ENCODE measurements at regions of chr16 and their contacts with region 1.

Region 1: GRCh38 chr16:80084685-80085084 is 456.1 kb upstream of the DYNLRB2 start:
- DNase-seq: peak; percentile 30
- ATAC-seq: peak; percentile 53
- H3K4me3 Mint-ChIP-seq: no peak overlapping the region
- H3K27ac Mint-ChIP-seq: no peak overlapping the region
- H3K4me1 Mint-ChIP-seq: no peaks in the 10 kb centered on the region
- H3K27me3 Mint-ChIP-seq: peaks cover 3% of the 10 kb centered on the region

Region 2: GRCh38 chr16:78503602-78504001 is 1581.1 kb before region 1 on chr16:
- CTCF ChIA-PET with region 1: no interaction called
- POLR2A ChIA-PET with region 1: no interaction called
- intact Hi-C with region 1: loop called in 1 of 2 experiments (anchors 10 kb)
- DNase-seq: peak; percentile 67
- ATAC-seq: peak; percentile 49
- H3K4me3 Mint-ChIP-seq: no peak overlapping the region
- H3K27ac Mint-ChIP-seq: no peak overlapping the region
- H3K4me1 Mint-ChIP-seq: no peaks in the 10 kb centered on the region
- H3K27me3 Mint-ChIP-seq: no peaks in the 10 kb centered on the region

Region 3: DNA sequence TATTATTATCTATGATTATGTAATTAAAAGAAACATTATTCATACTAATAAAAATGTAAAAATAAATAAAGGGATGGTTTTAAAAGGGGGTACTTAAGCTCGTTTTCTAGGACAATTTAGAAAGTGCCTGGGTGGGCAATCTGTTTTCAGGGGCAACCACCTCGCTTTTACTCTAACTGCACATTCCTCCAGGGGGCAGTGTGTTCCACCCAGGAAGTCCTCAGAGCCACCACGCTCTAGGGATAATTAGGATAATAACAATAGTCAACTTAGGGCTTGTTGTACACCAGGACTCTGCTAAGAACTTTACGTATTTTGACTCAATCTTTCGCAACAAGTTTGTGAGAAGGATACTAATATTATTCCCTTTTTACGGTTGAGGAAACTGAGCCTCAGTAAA is 87.4 kb before region 1 on chr16:
- CTCF ChIA-PET with region 1: no interaction called
- POLR2A ChIA-PET with region 1: no interaction called
- intact Hi-C with region 1: loop called in 1 of 2 experiments (anchors 5 kb)
- DNase-seq: peak; percentile 24
- ATAC-seq: no peak
- H3K4me3 Mint-ChIP-seq: no peak overlapping the region
- H3K27ac Mint-ChIP-seq: no peak overlapping the region
- H3K4me1 Mint-ChIP-seq: no peaks in the 10 kb centered on the region
- H3K27me3 Mint-ChIP-seq: peaks cover 2% of the 10 kb centered on the region

Measured in activated CD4-positive, alpha-beta T cell treated with anti-CD3 and anti-CD28 coated beads for 36 hours (primary cell).